Activated naive CD4-positive, alpha-beta T cell treated with anti-CD3 and anti-CD28 coated beads for 36 hours (primary cell): ENCODE measurements at regions of chr6 and their contacts with region 1.

Region 1: GRCh38 chr6:136317021-136317694 is 27.5 kb upstream of the BCLAF1 start:
- DNase-seq: peak; percentile 77
- H3K4me3 Mint-ChIP-seq: no peak overlapping the region
- H3K27ac Mint-ChIP-seq: no peak overlapping the region
- H3K4me1 Mint-ChIP-seq: no peaks in the 10 kb centered on the region
- H3K27me3 Mint-ChIP-seq: no peaks in the 10 kb centered on the region

Region 2: DNA sequence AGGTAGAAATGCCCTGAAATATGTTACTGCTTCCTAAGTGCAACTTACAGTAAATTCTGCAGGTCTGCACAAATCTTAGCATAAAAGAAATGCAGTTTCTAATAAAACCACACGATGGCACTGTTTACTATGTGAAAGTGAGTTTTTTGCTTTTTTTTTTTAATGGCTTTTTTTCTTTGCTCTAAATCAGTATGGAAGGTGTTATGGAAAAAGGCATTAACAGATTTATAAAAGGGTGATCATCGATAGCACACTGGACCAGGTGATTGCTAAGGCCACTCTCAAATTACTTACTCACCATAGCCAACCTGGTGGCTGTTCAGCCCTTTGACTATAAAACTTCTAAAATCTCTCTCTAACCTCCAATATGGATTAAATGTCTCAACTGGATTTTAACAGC is 865.5 kb before region 1 on chr6:
- CTCF ChIA-PET with region 1: no interaction called
- intact Hi-C with region 1: loop called (anchors 1 kb)
- DNase-seq: no peak
- H3K4me3 Mint-ChIP-seq: no peak overlapping the region
- H3K27ac Mint-ChIP-seq: no peak overlapping the region
- H3K4me1 Mint-ChIP-seq: no peaks in the 10 kb centered on the region
- H3K27me3 Mint-ChIP-seq: no peaks in the 10 kb centered on the region

Region 3: DNA sequence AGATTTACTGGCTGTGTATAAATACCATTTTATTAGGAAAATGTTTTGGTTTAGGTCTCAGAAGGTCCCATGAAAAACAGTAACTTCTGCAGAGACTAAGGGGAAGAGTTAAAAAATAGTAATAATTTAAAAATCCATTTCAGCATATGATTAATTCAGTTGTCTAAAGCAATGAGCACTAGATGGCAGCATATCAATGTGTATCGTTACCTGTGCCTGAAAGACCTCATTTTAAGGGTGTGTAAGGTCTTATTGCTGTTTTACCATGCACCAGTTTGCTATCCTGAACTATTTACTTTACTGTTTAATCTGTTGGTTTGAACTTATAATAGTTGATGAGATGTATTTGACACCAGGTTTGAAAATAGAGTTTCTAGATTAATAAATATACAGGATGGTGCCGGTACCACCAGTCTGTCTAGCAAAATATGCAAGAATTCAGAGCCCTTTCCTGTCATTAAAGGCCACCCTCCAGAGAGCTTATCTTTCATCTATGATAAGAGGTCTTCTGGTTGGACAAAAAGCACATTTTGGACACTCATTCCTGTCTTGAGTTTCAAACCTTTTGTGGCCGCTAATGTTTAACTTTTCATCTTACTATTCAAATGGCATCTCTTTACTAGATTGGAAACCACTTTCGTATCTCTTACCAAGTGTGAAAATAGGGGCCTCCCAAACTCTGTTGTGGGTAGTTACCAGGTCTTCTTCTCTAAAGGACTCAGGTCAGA is 810.7 kb before region 1 on chr6:
- CTCF ChIA-PET with region 1: interaction called, 4 read pairs
- intact Hi-C with region 1: loop called (anchors 1 kb)
- DNase-seq: peak; percentile 12
- H3K4me3 Mint-ChIP-seq: no peak overlapping the region
- H3K27ac Mint-ChIP-seq: no peak overlapping the region
- H3K4me1 Mint-ChIP-seq: peaks cover 2% of the 10 kb centered on the region
- H3K27me3 Mint-ChIP-seq: no peaks in the 10 kb centered on the region

Region 4: GRCh38 chr6:135675862-135676261 is 641.3 kb before region 1 on chr6:
- CTCF ChIA-PET with region 1: no interaction called
- intact Hi-C with region 1: loop called (anchors 1 kb)
- DNase-seq: peak; percentile 58
- H3K4me3 Mint-ChIP-seq: no peak overlapping the region
- H3K27ac Mint-ChIP-seq: no peak overlapping the region
- H3K4me1 Mint-ChIP-seq: peaks cover 10% of the 10 kb centered on the region
- H3K27me3 Mint-ChIP-seq: peaks cover 1% of the 10 kb centered on the region

Region 5: DNA sequence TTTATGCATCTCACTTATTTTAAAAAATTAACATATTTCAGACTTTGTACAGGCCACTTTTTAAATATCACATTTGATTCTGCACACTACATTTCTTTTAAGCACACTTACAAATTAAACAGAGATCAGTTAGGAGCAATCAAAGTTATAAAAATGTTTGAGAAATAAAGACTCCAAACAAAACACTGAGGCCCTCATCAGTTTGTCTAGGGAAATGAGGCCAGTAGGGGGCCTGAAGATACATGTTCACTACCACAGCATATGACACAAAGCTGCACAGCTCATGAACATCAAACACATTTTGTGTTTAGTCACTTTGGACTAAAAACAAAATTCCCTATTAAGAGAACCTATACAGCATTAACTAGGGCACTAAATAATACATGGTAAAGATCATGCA is 285.2 kb before region 1 on chr6:
- CTCF ChIA-PET with region 1: no interaction called
- intact Hi-C with region 1: loop called (anchors 10 kb)
- DNase-seq: peak; percentile 26
- H3K4me3 Mint-ChIP-seq: no peak overlapping the region
- H3K27ac Mint-ChIP-seq: no peak overlapping the region
- H3K4me1 Mint-ChIP-seq: no peaks in the 10 kb centered on the region
- H3K27me3 Mint-ChIP-seq: no peaks in the 10 kb centered on the region

Region 6: DNA sequence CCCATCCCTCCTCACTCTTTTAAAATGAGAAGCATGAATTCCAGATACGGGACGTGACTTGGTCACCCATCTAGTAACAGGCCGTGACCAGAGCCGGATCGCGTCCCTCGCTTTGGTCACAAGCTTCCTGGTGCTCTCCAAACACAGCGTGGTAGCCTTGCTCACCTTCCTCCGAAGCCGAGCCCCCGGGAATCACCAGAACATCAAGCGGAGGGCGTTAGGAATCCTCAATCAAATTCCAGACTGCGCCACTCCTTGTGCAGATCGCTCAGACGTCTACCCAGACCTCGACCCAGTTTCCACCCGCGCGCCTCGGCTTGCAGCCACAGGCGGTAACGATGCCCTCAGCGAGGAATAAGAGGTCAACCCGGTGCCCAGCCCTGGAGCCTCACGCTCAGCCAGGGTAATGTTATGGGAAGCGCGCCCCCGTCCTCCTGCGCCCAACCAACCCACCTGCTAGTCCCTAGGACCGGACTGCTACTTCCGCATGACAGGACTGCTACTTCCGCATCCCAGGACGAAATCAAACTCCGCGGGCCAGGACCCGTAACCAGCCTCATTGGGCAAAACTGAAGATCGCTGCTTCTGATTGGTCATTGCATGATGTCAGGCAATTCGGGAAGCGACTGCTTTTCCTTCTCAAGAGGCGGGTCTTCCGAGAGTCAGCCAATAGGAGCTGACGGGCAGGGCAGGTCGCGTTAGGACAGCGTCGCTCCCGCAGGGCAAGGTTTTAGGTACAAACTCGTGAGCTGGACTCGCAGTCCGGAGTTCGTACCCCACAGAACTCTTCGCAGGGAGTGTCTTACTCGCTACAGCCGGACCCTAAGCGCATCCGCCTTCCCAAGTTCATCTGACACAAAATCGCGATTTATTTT is 67.1 kb before region 1 on chr6 and contains the start of gene MTFR2:
- CTCF ChIA-PET with region 1: interaction called, 6 read pairs
- intact Hi-C with region 1: loop called (anchors 1 kb)
- DNase-seq: peak; percentile 97
- H3K4me3 Mint-ChIP-seq: peak within 1 kb of the TSS; percentile 95
- H3K27ac Mint-ChIP-seq: peak within 1 kb of the TSS; percentile 85
- H3K4me1 Mint-ChIP-seq: peaks cover 45% of the 10 kb centered on the region
- H3K27me3 Mint-ChIP-seq: no peaks in the 10 kb centered on the region
- total RNA-seq, gene MTFR2: 19.2 to 22.1 TPM

Region 7: GRCh38 chr6:136579800-136580199 is 262.6 kb after region 1 on chr6:
- CTCF ChIA-PET with region 1: no interaction called
- intact Hi-C with region 1: no loop called
- DNase-seq: no peak
- H3K4me3 Mint-ChIP-seq: no peak overlapping the region
- H3K27ac Mint-ChIP-seq: no peak overlapping the region
- H3K4me1 Mint-ChIP-seq: no peaks in the 10 kb centered on the region
- H3K27me3 Mint-ChIP-seq: no peaks in the 10 kb centered on the region